ENCODE measurements at regions of chr16 and their contacts with region 1.

Region 1: DNA sequence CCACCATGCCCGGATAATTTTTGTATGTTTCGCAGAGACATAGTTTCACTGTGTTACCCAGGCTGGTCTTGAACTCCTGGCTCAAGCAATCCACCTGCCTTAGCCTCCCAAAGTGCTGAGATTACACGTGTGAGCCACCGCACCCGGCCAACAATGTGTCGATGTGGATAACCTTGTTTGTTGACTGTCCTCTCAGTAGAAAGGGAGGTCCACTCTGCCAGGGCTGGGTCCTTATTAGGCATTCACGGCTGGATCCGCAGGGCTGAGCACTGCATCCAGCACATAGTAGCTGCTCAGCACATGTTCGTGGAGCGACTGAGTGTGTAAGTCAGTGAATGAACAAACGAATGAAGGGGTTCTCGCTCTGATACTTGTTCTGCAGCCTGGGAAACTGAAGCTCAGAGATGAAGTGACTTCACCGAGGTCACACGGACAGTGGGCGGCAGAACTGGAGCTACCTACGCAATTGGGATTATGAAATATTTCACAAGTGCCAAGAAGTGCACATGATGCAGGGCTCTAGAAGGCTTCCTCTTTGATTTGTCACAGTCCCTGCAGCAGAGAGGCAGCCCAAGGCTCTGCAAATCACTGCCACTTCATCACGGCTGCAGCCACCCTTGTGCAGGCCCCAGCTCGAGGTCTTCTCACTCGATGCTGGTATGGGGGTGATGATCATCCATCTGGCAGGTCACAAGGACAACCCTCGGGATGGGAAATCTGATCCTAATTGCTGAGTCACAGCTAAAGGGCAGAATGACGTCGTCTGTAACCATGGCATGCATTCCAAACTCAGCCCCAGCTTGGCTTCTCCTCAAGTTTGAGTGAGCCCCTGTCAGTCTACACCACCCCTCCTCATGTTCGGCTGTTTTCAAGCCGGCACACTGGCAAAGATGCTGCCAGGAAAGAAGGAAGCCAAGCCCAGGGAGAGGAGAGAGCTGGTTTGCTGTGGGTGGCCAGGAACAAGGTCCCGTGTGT is 28.0 kb upstream of the SNN start:
- DNase-seq: peak in 3 of 9 experiments; percentile 20 to 60 (median 57)
- ATAC-seq: no peak
- H3K4me3 ChIP-seq: no peak overlapping the region
- H3K4me3 Mint-ChIP-seq: no peak overlapping the region
- H3K27ac ChIP-seq: no peak overlapping the region
- H3K27ac Mint-ChIP-seq: peak overlapping the region; percentile 27
- H3K4me1 ChIP-seq: peaks cover 10% of the 10 kb centered on the region
- H3K4me1 Mint-ChIP-seq: peaks cover 24% of the 10 kb centered on the region
- H3K27me3 ChIP-seq: no peaks in the 10 kb centered on the region
- H3K27me3 Mint-ChIP-seq: no peaks in the 10 kb centered on the region
- CTCF ChIP-seq: no peak

Region 2: DNA sequence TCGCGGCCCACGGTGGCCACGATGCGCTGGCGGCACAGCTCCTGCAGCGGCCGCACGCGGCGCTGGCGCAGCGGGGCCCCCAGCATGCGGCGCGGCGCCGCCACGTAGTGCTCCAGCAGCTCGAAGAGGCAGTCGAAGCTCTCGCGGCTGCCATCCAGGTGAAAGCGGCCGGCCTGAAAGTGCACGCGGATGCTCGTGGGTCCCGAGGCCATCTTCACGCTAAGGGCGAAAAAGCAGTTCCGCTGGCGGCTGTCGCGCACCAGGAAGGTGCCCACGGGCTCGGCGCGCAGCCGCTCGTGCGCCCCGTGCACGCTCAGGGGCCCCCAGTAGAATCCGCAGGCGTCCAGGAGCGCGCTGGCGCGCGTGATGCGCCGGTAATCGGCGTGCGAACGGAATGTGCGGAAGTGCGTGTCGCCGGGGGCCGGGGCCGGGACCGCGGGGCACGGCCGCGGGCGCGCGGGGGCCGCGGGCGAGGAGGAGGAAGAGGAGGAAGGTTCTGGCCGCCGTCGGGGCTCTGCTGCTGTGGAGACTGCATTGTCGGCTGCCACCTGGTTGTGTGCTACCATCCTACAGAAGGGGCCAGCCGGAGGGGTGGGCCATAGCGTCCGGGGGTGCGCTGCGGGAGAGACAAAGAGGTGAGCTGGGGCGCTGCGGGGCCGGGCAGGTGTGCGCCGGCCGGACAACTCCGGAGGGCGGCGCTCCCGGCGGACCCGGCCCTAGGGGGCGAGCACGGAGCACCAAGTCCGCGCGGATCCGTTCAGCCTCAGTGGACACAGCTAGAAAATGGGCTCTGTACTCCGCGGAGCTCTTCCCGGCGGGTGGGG is 385.1 kb before region 1 on chr16:
- CTCF ChIA-PET with region 1: no interaction called
- POLR2A ChIA-PET with region 1: no interaction called
- intact Hi-C with region 1: no loop called
- DNase-seq: peak; percentile 46 to 89 (median 70)
- ATAC-seq: peak; percentile 30
- H3K4me3 ChIP-seq: peak overlapping the region; percentile 59 to 90
- H3K4me3 Mint-ChIP-seq: peak overlapping the region; percentile 85
- H3K27ac ChIP-seq: peak overlapping the region; percentile 36 to 70
- H3K27ac Mint-ChIP-seq: peak overlapping the region; percentile 89
- H3K4me1 ChIP-seq: peaks cover 61% of the 10 kb centered on the region
- H3K4me1 Mint-ChIP-seq: peaks cover 56% of the 10 kb centered on the region
- H3K27me3 ChIP-seq: no peaks in the 10 kb centered on the region
- H3K27me3 Mint-ChIP-seq: no peaks in the 10 kb centered on the region
- CTCF ChIP-seq: no peak

Region 3: GRCh38 chr16:11530171-11530940 is 109.9 kb before region 1 on chr16:
- CTCF ChIA-PET with region 1: interaction called, 178 read pairs
- POLR2A ChIA-PET with region 1: interaction called, 6 read pairs
- intact Hi-C with region 1: loop called (anchors 1 kb)
- DNase-seq: no peak
- ATAC-seq: no peak
- H3K4me3 ChIP-seq: no peak overlapping the region
- H3K4me3 Mint-ChIP-seq: no peak overlapping the region
- H3K27ac ChIP-seq: no peak overlapping the region
- H3K27ac Mint-ChIP-seq: no peak overlapping the region
- H3K4me1 ChIP-seq: no peaks in the 10 kb centered on the region
- H3K4me1 Mint-ChIP-seq: peaks cover 3% of the 10 kb centered on the region
- H3K27me3 ChIP-seq: no peaks in the 10 kb centered on the region
- H3K27me3 Mint-ChIP-seq: no peaks in the 10 kb centered on the region
- CTCF ChIP-seq: no peak

Region 4: DNA sequence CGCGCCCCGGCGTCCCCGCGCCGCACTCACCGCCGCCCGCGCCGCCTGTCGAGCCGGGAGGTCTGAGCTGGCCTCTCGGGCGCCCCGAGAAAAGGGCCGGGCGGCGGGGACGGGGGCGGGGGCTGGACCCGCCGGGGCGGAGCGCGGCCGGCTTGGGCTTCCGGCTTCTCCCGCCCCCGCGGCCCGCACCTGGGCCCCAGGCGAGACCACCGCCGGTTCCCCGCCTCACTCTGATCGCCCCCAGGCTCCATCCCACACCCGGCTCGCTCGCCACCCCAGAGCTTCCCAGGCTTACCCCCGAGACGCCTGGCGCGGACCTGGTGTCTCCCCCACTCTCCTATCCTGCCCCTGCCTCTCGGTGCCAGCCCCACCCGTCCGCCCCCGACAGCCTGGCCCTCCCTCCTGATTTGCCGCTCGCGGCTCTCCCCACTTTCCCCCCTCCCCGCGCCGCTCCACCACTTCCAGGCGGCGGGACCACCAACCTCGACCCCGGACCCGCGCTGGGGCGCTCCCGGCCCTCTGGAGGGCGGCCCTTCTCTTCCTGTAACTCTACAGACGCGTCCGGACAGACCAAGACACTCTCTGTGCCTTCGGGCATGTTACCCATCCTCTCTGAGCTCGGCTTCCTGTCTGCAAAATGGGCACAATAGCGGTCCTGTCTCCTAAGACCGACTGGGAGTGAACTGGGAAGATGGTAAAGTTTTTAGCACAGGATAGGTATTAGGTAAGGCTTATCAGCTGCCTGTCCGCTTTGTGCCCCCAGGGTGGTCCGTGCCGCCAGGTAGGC is 53.2 kb before region 1 on chr16 and contains the start of gene LITAF:
- CTCF ChIA-PET with region 1: interaction called, 30 read pairs
- POLR2A ChIA-PET with region 1: interaction called, 3 read pairs
- intact Hi-C with region 1: loop called (anchors 1 to 5 kb)
- DNase-seq: peak in 8 of 9 experiments; percentile 34 to 82 (median 67)
- ATAC-seq: peak; percentile 59
- H3K4me3 ChIP-seq: peak within 1 kb of the TSS; percentile 71 to 93
- H3K4me3 Mint-ChIP-seq: peak within 1 kb of the TSS; percentile 97
- H3K27ac ChIP-seq: peak within 1 kb of the TSS; percentile 72 to 89
- H3K27ac Mint-ChIP-seq: peak within 1 kb of the TSS; percentile 98
- H3K4me1 ChIP-seq: peaks cover 33% of the 10 kb centered on the region
- H3K4me1 Mint-ChIP-seq: peaks cover 41% of the 10 kb centered on the region
- H3K27me3 ChIP-seq: no peaks in the 10 kb centered on the region
- H3K27me3 Mint-ChIP-seq: no peaks in the 10 kb centered on the region
- CTCF ChIP-seq: no peak
- total RNA-seq, gene LITAF: 543 TPM

Region 5: GRCh38 chr16:11611871-11612664 is 28.1 kb before region 1 on chr16:
- CTCF ChIA-PET with region 1: interaction called, 10 read pairs
- POLR2A ChIA-PET with region 1: no interaction called
- intact Hi-C with region 1: no loop called
- DNase-seq: peak in 1 of 9 experiments; percentile 37
- ATAC-seq: no peak
- H3K4me3 ChIP-seq: no peak overlapping the region
- H3K4me3 Mint-ChIP-seq: no peak overlapping the region
- H3K27ac ChIP-seq: no peak overlapping the region
- H3K27ac Mint-ChIP-seq: no peak overlapping the region
- H3K4me1 ChIP-seq: peaks cover 31% of the 10 kb centered on the region
- H3K4me1 Mint-ChIP-seq: peaks cover 39% of the 10 kb centered on the region
- H3K27me3 ChIP-seq: no peaks in the 10 kb centered on the region
- H3K27me3 Mint-ChIP-seq: no peaks in the 10 kb centered on the region
- CTCF ChIP-seq: no peak

Region 6: DNA sequence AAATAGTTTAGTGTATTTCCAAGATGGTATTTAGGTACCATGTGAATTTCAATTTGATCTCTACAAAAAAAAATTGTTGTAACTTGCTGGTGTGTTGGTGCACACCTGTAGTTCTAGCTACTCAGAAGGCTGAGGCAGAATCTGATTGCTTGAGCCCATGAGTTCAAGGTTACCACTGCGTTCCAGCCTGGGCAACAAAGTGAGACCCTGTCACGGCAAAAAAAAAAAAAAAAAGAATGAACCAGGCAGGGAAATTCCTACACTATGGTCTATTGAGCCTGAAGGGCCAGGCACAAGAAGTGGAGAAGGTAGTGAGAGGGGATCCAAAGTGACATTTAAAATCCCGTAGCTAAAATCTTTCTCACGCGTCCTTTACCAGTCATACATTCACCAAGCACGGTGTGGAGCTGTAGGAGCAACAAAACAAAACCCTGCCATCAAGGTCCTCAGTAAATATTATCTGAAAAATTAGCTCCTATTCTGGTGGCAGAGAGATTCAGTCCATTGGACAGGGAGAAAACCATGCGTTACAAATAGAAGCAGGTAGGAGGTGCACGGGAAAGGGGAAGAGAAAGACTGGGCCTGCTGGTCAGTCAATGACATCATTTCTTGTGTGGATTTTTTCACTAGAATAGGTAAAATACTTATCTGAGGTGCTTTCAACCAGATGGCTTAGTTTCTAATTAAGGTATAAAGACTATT is 75.2 kb after region 1 on chr16:
- CTCF ChIA-PET with region 1: interaction called, 73 read pairs
- POLR2A ChIA-PET with region 1: no interaction called
- intact Hi-C with region 1: loop called in 1 of 2 experiments (anchors 1 kb)
- DNase-seq: no peak
- ATAC-seq: no peak
- H3K4me3 ChIP-seq: no peak overlapping the region
- H3K4me3 Mint-ChIP-seq: no peak overlapping the region
- H3K27ac ChIP-seq: no peak overlapping the region
- H3K27ac Mint-ChIP-seq: no peak overlapping the region
- H3K4me1 ChIP-seq: no peaks in the 10 kb centered on the region
- H3K4me1 Mint-ChIP-seq: peaks cover 25% of the 10 kb centered on the region
- H3K27me3 ChIP-seq: no peaks in the 10 kb centered on the region
- H3K27me3 Mint-ChIP-seq: no peaks in the 10 kb centered on the region
- CTCF ChIP-seq: no peak

Measured in CD8-positive, alpha-beta T cell (primary cell).